CD4-positive, alpha-beta T cell (primary cell): ENCODE measurements at regions of chr17 and their contacts with region 1.

Region 1: DNA sequence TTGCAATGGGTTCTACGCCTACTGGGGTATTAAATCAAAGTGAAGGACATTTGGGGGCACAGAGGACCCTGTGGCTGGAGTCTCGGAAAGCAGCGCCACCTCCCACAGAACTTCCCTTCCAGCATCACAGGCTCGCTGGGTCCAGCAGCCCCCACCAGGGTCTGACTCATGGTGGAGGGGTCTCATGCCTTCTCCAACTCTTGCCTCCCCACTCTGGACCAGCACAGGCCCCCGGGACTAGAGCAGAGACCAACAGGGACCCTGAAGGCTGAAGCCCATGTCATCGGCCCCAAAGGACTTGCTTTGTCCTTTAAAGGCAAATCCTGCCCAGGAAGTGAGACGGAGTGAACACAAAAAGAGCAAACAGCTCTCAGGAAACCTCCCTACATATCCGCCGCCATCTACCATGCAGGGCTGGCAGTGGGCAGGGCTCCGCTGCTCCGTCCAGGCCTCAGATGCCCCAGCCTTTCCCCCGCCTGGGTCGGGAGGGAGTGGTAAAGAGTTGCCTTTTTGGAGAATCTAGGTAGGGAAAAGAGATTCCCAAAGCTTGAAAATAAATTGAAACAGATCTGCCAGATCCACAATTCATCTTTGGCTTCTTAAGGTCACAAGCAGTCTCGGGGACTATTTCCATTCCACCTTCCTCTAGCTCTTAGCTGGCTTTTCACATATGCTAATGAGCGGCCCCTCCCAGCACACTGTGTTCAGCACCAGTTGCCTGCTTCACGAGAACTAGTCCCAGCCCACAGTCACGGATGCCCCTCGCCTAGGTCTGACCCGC is 2.1 kb upstream of the GPRC5C start:
- DNase-seq: no peak
- ATAC-seq: no peak
- H3K4me3 ChIP-seq: no peak overlapping the region
- H3K4me3 Mint-ChIP-seq: no peak overlapping the region
- H3K27ac ChIP-seq: no peak overlapping the region
- H3K27ac Mint-ChIP-seq: no peak overlapping the region
- H3K4me1 ChIP-seq: peaks cover 27% of the 10 kb centered on the region
- H3K4me1 Mint-ChIP-seq: no peaks in the 10 kb centered on the region
- H3K27me3 ChIP-seq: peaks cover 36 to 46% of the 10 kb centered on the region in 2 experiments
- H3K27me3 Mint-ChIP-seq: peaks cover 76% of the 10 kb centered on the region
- CTCF ChIP-seq: no peak

Region 2: DNA sequence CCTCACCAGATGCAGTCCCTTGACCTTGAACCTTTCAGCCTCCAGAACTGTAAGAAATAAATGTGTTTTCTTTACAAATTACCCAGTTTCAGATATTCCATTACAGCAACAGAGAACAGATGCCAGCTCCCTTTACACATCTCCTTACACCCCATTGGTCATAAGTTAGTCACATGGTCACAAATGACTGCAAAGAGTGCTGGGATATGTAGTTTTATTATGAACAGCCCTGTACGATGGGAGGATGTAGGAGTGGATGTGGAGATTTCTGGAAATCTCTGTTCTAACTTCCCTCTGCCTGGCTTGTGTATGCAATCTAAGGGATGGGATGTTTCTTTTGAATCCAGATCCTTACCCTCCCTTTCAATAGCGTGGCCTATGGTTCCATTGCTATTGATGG is 239.6 kb before region 1 on chr17:
- CTCF ChIA-PET with region 1: no interaction called
- POLR2A ChIA-PET with region 1: no interaction called
- intact Hi-C with region 1: no loop called
- DNase-seq: peak in 4 of 14 experiments; percentile 2 to 50 (median 48)
- ATAC-seq: peak; percentile 88
- H3K4me3 ChIP-seq: no peak overlapping the region
- H3K4me3 Mint-ChIP-seq: no peak overlapping the region
- H3K27ac ChIP-seq: no peak overlapping the region
- H3K27ac Mint-ChIP-seq: no peak overlapping the region
- H3K4me1 ChIP-seq: peaks cover 2% of the 10 kb centered on the region
- H3K4me1 Mint-ChIP-seq: no peaks in the 10 kb centered on the region
- H3K27me3 ChIP-seq: peaks cover 0 to 8% of the 10 kb centered on the region in 2 experiments
- H3K27me3 Mint-ChIP-seq: peaks cover 21% of the 10 kb centered on the region
- CTCF ChIP-seq: no peak

Region 3: DNA sequence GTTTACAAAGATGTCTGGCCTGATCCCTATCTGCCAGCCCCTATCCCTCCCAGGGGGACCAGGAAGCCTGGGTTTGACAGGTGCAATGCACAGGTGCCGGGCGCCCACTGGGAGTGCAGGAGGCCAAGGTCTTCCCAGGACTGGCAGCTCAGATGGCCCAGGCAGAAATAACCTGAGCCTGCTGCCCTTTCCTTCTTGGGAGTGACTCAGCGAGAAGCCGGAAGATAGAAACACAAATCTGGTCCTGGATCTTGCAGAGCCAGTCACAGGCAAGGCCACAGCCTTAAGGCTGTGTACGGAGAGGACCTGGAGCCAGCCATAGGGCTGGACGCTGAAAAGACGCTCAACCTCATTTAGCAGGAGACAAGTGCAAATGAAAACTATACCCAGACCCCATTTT is 34.8 kb before region 1 on chr17:
- CTCF ChIA-PET with region 1: no interaction called
- POLR2A ChIA-PET with region 1: no interaction called
- intact Hi-C with region 1: no loop called
- DNase-seq: no peak
- ATAC-seq: no peak
- H3K4me3 ChIP-seq: no peak overlapping the region
- H3K4me3 Mint-ChIP-seq: no peak overlapping the region
- H3K27ac ChIP-seq: no peak overlapping the region
- H3K27ac Mint-ChIP-seq: no peak overlapping the region
- H3K4me1 ChIP-seq: no peaks in the 10 kb centered on the region
- H3K4me1 Mint-ChIP-seq: no peaks in the 10 kb centered on the region
- H3K27me3 ChIP-seq: no peaks in the 10 kb centered on the region
- H3K27me3 Mint-ChIP-seq: no peaks in the 10 kb centered on the region
- CTCF ChIP-seq: no peak

Region 4: GRCh38 chr17:74478420-74479100 is 48.8 kb after region 1 on chr17:
- CTCF ChIA-PET with region 1: no interaction called
- POLR2A ChIA-PET with region 1: no interaction called
- intact Hi-C with region 1: no loop called
- DNase-seq: peak in 5 of 14 experiments; percentile 29 to 76 (median 70)
- ATAC-seq: peak; percentile 59
- H3K4me3 ChIP-seq: no peak overlapping the region
- H3K4me3 Mint-ChIP-seq: peak overlapping the region; percentile 64
- H3K27ac ChIP-seq: peak overlapping the region; percentile 25 to 31
- H3K27ac Mint-ChIP-seq: peak overlapping the region; percentile 12
- H3K4me1 ChIP-seq: peaks cover 62% of the 10 kb centered on the region
- H3K4me1 Mint-ChIP-seq: peaks cover 60% of the 10 kb centered on the region
- H3K27me3 ChIP-seq: no peaks in the 10 kb centered on the region
- H3K27me3 Mint-ChIP-seq: no peaks in the 10 kb centered on the region
- CTCF ChIP-seq: no peak

Region 5: DNA sequence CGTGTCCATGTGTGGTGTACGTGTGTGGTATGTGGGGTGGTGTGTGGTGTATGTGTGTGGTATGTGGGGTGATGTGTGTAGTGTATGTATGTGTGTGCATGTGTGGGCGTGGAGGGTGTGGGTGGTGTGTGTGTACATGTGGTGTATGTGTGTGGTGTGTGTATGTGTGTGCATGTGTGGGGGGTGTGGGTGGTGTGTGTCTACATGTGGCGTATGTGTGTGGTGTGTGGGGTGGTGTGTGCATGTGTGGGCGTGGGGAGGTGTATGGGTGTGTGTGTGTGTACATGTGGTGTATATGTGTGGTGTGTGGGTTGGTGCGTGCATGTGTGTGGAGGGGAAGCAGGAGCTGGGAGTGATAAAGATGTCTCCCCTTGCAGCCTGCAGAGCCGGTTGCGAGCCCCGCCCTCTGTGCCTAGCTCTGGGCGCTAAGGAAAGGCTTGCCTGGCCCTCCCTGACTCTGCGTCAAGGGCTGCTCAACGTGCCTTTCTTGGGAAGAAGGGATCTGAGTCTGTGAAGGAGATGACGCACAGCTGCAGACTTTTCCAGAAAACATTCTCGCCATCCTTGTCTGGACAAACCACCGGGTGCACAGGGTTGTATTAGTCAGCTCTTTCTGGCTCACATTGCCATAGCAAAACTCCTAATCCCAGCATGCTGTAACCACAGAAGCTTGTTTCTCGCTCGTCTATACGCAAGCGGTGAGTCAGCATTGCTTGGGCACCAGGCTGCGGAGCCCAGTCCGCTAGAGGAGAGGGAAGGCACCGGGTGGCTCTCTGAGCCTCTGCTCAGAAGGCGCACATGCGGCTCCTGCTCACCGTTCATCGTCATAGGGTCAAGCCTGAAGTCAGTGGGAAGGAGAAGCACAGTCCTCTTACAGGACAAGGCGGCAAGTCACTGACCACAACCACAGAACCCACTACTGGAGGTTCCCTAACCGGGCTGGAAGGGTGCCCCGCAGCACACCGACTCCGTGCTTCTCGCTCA is 139.5 kb after region 1 on chr17:
- CTCF ChIA-PET with region 1: no interaction called
- POLR2A ChIA-PET with region 1: no interaction called
- intact Hi-C with region 1: no loop called
- DNase-seq: peak in 4 of 14 experiments; percentile 5 to 80 (median 46)
- ATAC-seq: no peak
- H3K4me3 ChIP-seq: no peak overlapping the region
- H3K4me3 Mint-ChIP-seq: no peak overlapping the region
- H3K27ac ChIP-seq: no peak overlapping the region
- H3K27ac Mint-ChIP-seq: no peak overlapping the region
- H3K4me1 ChIP-seq: peaks cover 11% of the 10 kb centered on the region
- H3K4me1 Mint-ChIP-seq: no peaks in the 10 kb centered on the region
- H3K27me3 ChIP-seq: peaks cover 11 to 14% of the 10 kb centered on the region in 2 experiments
- H3K27me3 Mint-ChIP-seq: peaks cover 38% of the 10 kb centered on the region
- CTCF ChIP-seq: no peak

Region 6: DNA sequence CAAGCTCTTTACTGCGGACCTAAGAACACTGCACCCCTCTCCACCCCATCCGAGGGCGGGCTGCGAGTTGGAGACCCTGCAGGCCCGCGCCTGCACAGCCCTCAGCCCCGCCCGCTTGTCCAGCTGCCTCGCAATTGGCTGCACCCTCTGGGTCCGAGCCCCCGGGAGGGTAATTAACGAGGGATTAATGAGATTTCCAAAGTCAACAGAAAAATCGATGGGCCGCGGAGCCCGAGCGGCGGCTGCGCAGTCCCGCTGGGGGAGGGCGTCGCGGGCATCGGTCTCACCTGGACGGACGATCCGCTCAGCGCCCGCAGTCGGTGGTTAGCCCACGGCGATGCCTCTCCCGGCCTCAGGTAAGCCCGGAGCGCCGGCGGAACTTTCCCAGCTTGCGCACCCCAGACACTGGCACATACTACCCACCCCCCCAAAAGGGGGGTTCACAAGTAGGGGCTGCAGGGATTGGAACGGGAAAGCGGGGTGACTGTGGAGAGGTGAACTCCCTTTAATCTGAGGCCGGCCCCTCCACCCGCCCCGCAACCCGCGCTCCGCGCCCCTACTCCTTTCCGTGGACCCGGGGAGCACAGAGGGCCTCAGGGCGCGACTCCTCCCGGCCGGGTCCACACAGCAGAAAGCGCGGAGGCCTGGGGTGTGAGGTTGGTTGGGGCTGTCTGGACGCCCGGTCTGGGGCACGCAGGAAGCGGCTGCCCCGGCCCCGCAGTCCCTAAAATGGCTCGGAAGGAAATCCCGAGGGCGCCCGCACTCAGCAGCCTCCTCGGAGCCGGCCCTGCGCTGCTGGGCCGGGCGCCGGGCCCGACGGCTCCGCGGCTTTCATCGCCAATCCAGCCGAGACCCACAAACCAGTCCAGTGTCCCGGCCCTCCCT is 506.0 kb after region 1 on chr17 and contains the start of gene OTOP3:
- CTCF ChIA-PET with region 1: no interaction called
- POLR2A ChIA-PET with region 1: no interaction called
- intact Hi-C with region 1: loop called in 1 of 2 experiments (anchors 10 kb)
- DNase-seq: no peak
- ATAC-seq: no peak
- H3K4me3 ChIP-seq: no peak within 1 kb of the TSS
- H3K4me3 Mint-ChIP-seq: no peak within 1 kb of the TSS
- H3K27ac ChIP-seq: no peak within 1 kb of the TSS
- H3K27ac Mint-ChIP-seq: no peak within 1 kb of the TSS
- H3K4me1 ChIP-seq: peaks cover 9% of the 10 kb centered on the region
- H3K4me1 Mint-ChIP-seq: no peaks in the 10 kb centered on the region
- H3K27me3 ChIP-seq: peaks cover 51 to 58% of the 10 kb centered on the region in 2 experiments
- H3K27me3 Mint-ChIP-seq: peaks cover 78% of the 10 kb centered on the region
- CTCF ChIP-seq: no peak
- total RNA-seq, gene OTOP3: not detected